Activated CD4-positive, alpha-beta T cell treated with anti-CD3 and anti-CD28 coated beads for 36 hours (primary cell): ENCODE measurements at regions of chr16 and their contacts with region 1.

Region 1: DNA sequence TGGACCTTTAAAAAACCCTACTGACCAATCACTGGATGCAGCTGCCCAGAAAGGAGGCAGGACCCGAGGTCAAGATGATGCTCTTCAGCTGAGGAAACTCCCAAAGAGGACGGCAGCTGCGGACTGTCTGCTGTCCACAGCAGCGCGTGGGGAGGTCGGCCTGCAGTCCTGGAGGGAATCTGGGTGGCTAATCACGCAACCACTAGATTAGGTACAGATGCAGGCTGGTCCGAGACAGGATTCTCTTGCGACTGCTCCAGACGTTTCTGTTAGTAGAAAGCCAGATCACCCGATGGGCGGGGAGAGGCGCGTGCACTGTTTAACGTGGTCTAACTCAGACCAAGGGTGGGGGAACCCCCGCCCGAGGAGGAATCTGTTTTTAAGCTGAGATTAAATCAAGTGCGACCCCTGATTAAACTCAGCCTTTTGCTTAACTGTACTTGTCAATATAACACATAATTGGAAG is 8.8 kb downstream of the CTRB2 start:
- DNase-seq: no peak
- ATAC-seq: no peak
- H3K4me3 Mint-ChIP-seq: no peak overlapping the region
- H3K27ac Mint-ChIP-seq: no peak overlapping the region
- H3K4me1 Mint-ChIP-seq: peaks cover 8% of the 10 kb centered on the region
- H3K27me3 Mint-ChIP-seq: peaks cover 10% of the 10 kb centered on the region

Region 2: DNA sequence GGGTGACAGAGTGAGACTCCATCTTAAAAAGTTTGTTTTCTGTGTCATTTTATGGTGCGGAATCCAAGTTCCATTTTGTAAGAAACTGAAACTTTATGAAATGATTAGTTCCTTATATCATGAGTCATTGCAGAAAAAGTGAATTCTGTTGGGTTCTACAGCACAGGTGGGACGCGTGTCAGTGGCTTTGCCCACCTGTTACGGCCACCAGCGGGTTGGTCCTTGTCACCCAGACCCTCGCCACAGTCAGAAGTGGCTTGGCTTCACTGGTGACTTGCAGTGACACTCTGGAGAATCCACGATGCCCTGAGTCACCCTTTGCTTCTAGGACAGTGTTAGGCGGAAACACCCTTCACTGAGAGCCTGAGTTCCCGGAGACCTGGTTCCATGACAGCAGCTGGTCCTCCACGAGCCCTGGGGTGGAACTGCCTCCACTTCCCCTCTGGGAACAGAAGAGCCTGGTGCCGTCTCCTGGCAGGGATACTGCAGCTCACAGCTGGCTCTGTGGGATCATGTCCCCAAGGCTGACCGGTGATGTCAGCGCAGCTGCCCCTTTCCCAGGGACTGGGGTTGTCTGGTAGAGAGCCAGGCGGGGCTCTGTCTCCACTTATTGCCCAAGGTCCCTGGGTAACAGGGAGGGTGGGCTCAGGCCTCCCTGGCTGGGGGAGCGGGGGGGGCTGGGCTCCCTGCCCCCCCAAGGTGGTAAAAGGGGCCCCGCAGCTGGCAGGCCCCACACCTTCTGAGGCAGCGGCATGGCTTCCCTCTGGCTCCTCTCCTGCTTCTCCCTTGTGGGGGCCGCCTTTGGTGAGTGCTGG is 20.3 kb after region 1 on chr16 and contains the start of gene CTRB1:
- CTCF ChIA-PET with region 1: interaction called, 12 read pairs
- POLR2A ChIA-PET with region 1: no interaction called
- intact Hi-C with region 1: loop called (anchors 1 kb)
- DNase-seq: peak; percentile 46
- ATAC-seq: peak; percentile 45
- H3K4me3 Mint-ChIP-seq: peak within 1 kb of the TSS; percentile 67
- H3K27ac Mint-ChIP-seq: peak within 1 kb of the TSS; percentile 83
- H3K4me1 Mint-ChIP-seq: peaks cover 21% of the 10 kb centered on the region
- H3K27me3 Mint-ChIP-seq: no peaks in the 10 kb centered on the region
- total RNA-seq, gene CTRB1: not detected

Region 3: GRCh38 chr16:75282466-75283288 is 84.5 kb after region 1 on chr16:
- CTCF ChIA-PET with region 1: no interaction called
- POLR2A ChIA-PET with region 1: no interaction called
- intact Hi-C with region 1: no loop called
- DNase-seq: no peak
- ATAC-seq: no peak
- H3K4me3 Mint-ChIP-seq: no peak overlapping the region
- H3K27ac Mint-ChIP-seq: no peak overlapping the region
- H3K4me1 Mint-ChIP-seq: no peaks in the 10 kb centered on the region
- H3K27me3 Mint-ChIP-seq: peaks cover 10% of the 10 kb centered on the region

Region 4: DNA sequence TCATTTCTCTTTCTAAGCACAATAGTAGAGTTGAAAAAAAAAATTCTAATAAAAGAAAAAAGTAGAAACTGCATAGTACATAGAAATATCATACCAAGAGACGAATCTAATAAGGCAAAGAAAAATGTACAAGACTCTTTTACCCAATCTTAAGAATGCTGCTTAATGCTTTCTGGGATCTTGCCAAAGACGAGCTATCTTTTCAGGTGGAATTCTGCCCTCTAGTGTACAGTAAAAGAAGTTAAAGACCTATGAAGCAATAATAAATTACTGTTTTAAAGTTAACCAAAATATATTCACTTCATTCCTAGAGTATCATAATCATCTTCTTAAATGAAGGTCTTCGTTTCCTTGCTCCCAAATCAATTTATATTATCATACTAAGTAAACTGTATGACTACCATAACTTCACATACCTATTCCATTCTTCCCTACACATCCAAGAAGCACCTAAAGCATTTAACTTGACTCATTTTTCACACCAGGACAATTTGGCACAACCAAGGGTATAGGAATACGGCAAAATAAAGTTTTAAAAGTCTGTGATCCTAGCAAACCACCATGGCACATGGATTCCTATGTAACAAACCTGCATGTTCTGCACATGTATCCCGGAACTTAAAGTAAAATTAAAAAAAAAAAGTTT is 187.5 kb after region 1 on chr16:
- CTCF ChIA-PET with region 1: interaction called, 61 read pairs
- POLR2A ChIA-PET with region 1: no interaction called
- intact Hi-C with region 1: loop called (anchors 1 kb)
- DNase-seq: no peak
- ATAC-seq: peak; percentile 47
- H3K4me3 Mint-ChIP-seq: no peak overlapping the region
- H3K27ac Mint-ChIP-seq: no peak overlapping the region
- H3K4me1 Mint-ChIP-seq: peaks cover 18% of the 10 kb centered on the region
- H3K27me3 Mint-ChIP-seq: peaks cover 2% of the 10 kb centered on the region

Region 5: DNA sequence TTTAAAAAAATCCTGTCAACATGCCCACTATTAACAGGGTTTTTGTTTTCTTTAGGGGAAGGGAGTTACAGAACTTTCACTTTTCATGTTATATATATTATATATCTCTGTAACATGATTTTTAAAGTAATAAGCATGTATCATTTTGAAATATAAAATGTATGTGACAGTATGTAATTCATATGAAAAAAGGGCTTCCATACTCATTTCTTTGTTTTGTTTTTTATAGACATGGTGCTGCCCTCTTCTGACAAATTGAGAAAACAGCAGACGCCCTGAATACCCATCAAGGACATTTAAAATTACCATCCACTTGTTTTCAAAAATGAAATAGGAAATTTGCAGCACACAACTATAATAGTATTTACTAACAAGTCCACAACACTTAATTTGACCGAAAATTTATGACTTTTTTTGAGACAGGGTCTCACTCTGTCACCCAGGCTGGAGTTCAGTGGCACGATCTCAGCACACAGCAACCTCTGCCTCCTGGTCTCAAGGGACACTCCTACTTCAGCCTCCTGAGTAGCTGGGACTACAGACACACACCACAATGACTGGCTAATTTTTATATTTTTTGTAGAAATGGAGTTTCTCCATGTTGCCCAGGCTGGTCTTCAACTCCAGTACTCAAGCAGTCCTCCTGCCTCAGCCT is 204.8 kb after region 1 on chr16:
- CTCF ChIA-PET with region 1: interaction called, 28 read pairs
- POLR2A ChIA-PET with region 1: no interaction called
- intact Hi-C with region 1: loop called (anchors 1 to 2 kb)
- DNase-seq: no peak
- ATAC-seq: peak; percentile 76
- H3K4me3 Mint-ChIP-seq: no peak overlapping the region
- H3K27ac Mint-ChIP-seq: peak overlapping the region; percentile 19
- H3K4me1 Mint-ChIP-seq: peaks cover 17% of the 10 kb centered on the region
- H3K27me3 Mint-ChIP-seq: no peaks in the 10 kb centered on the region

Region 6: DNA sequence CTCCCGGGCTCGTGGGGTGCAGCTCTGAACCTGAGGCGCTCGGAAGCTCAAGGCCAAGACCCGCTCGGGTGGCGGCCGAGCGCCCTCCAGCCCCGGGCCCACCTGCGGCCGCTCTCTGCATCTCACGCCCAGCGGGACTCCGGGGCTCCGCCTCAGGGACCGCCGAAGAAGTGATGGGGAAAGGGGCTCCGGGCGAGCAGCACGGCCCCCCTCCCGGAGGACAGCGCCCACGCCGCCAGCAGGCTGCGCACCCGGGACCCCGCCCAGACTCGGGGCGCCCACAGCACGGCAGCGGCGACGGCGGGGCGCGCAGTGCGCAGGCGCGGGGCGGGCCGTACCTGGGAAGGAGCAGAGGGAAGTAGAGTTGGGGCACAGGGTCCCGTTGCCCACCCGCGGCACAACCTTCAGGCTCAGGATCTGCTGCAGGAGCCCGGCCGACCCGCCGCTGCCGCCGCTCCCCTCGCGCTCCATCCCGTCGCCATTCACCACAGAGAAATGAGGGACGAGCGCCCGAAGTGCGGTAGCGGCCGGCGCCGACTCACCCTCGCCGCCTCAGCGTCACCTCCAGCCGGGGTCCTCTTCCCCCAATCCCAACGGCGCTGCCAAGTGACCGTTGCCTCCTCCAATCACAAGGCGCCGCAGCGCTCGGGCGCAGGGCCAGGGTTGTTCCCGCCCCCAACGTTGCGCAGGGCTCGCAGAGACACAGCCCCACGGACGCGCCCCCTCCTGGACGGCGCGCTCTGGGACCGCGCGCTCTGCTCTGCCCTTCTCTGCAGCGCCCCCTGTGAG is 266.2 kb after region 1 on chr16 and contains the start of gene TMEM170A:
- CTCF ChIA-PET with region 1: interaction called, 15 read pairs
- POLR2A ChIA-PET with region 1: no interaction called
- intact Hi-C with region 1: loop called (anchors 1 to 5 kb)
- DNase-seq: peak; percentile 100
- ATAC-seq: peak; percentile 94
- H3K4me3 Mint-ChIP-seq: peak within 1 kb of the TSS; percentile 98
- H3K27ac Mint-ChIP-seq: peak within 1 kb of the TSS; percentile 94
- H3K4me1 Mint-ChIP-seq: peaks cover 45% of the 10 kb centered on the region
- H3K27me3 Mint-ChIP-seq: no peaks in the 10 kb centered on the region
- total RNA-seq, gene TMEM170A: 22.0 to 30.5 TPM

Region 7: GRCh38 chr16:75764154-75764768 is 566.1 kb after region 1 on chr16:
- CTCF ChIA-PET with region 1: interaction called, 7 read pairs
- POLR2A ChIA-PET with region 1: no interaction called
- intact Hi-C with region 1: loop called (anchors 1 to 2 kb)
- DNase-seq: peak; percentile 70
- ATAC-seq: peak; percentile 93
- H3K4me3 Mint-ChIP-seq: no peak overlapping the region
- H3K27ac Mint-ChIP-seq: no peak overlapping the region
- H3K4me1 Mint-ChIP-seq: peaks cover 11% of the 10 kb centered on the region
- H3K27me3 Mint-ChIP-seq: peaks cover 2% of the 10 kb centered on the region